ENCODE measurements at regions of chrX and their contacts with region 1.

Region 1: GRCh38 chrX:24024819-24025740 is 1.9 kb downstream of the KLHL15 start:
- DNase-seq: peak; percentile 59 to 86 (median 74)
- ATAC-seq: peak; percentile 87 to 94 (median 88)
- H3K4me3 ChIP-seq: peak overlapping the region; percentile 62 to 89
- H3K4me3 Mint-ChIP-seq: peak overlapping the region; percentile 83 to 88 (median 86)
- H3K27ac ChIP-seq: peak overlapping the region; percentile 32
- H3K27ac Mint-ChIP-seq: no peak overlapping the region
- H3K4me1 ChIP-seq: peaks cover 3 to 5% of the 10 kb centered on the region in 2 experiments
- H3K4me1 Mint-ChIP-seq: peaks cover 20 to 32% (median 24%) of the 10 kb centered on the region in 3 donors
- H3K27me3 ChIP-seq: no peaks in the 10 kb centered on the region
- H3K27me3 Mint-ChIP-seq: peaks cover 0 to 6% of the 10 kb centered on the region in 2 donors

Region 2: GRCh38 chrX:23907498-23908218 is 117.4 kb before region 1 on chrX and contains the starts of genes APOO and CXorf58:
- CTCF ChIA-PET with region 1: interaction called in 1 of 2 experiments, 10 read pairs
- POLR2A ChIA-PET with region 1: no interaction called
- DNase-seq: peak; percentile 76 to 94 (median 89)
- ATAC-seq: peak; percentile 93 to 96 (median 95)
- H3K4me3 ChIP-seq: peak within 1 kb of the TSS; percentile 49 to 61
- H3K4me3 Mint-ChIP-seq: peak within 1 kb of the TSS; percentile 78 to 82 (median 79)
- H3K27ac ChIP-seq: peak within 1 kb of the TSS; percentile 92
- H3K27ac Mint-ChIP-seq: peak within 1 kb of the TSS; percentile 89 to 90
- H3K4me1 ChIP-seq: peaks cover 4 to 10% of the 10 kb centered on the region in 2 experiments
- H3K4me1 Mint-ChIP-seq: peaks cover 7 to 16% (median 14%) of the 10 kb centered on the region in 3 donors
- H3K27me3 ChIP-seq: no peaks in the 10 kb centered on the region
- H3K27me3 Mint-ChIP-seq: peaks cover 0 to 4% of the 10 kb centered on the region in 2 donors
- total RNA-seq, gene APOO: 5.2 to 16.5 (median 6.4) TPM
- total RNA-seq, gene CXorf58: not detected

Measured in T-cell (primary cell).